ENCODE measurements at regions of chr5 and their contacts with region 1.

Region 1: DNA sequence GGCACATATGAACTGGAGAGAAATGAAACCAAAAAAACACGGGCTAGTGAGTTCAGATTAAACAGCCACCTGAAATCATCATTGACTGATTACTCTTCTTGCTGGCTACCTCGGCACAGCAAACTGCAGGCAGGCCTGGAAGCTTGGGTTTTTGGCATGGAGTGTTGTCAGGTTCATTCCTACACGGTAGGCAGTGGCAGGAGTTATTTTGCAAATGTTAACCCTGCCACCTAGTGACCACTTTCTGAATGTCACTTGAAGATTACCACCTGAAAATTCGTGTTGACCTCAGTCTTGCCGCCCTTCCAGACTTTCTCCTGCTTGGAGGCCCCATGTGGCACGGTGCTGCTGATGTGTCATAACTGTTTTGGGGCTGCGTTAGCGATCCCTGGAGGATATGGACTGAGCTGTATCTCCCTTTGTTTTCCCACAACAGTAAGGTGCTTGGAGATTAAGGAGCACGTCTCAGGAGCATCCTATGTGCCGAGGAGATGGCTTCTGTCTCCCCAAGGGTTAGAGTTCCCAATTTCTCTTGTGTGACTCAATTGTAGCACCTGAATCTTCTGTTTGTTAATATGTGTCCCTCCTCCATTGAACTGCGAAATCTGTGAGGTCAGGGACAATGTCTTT is 12.7 kb upstream of the CD180 start:
- DNase-seq: no peak
- ATAC-seq: peak; percentile 56
- H3K4me3 ChIP-seq: no peak overlapping the region
- H3K27ac ChIP-seq: no peak overlapping the region
- H3K4me1 ChIP-seq: peaks cover 38% of the 10 kb centered on the region
- H3K27me3 ChIP-seq: no peaks in the 10 kb centered on the region
- CTCF ChIP-seq: peak; percentile 68 to 88 (median 71)
- EP300 ChIP-seq: no peak
- POLR2A ChIP-seq: no peak
- RAD21 ChIP-seq: peak; percentile 78

Region 2: DNA sequence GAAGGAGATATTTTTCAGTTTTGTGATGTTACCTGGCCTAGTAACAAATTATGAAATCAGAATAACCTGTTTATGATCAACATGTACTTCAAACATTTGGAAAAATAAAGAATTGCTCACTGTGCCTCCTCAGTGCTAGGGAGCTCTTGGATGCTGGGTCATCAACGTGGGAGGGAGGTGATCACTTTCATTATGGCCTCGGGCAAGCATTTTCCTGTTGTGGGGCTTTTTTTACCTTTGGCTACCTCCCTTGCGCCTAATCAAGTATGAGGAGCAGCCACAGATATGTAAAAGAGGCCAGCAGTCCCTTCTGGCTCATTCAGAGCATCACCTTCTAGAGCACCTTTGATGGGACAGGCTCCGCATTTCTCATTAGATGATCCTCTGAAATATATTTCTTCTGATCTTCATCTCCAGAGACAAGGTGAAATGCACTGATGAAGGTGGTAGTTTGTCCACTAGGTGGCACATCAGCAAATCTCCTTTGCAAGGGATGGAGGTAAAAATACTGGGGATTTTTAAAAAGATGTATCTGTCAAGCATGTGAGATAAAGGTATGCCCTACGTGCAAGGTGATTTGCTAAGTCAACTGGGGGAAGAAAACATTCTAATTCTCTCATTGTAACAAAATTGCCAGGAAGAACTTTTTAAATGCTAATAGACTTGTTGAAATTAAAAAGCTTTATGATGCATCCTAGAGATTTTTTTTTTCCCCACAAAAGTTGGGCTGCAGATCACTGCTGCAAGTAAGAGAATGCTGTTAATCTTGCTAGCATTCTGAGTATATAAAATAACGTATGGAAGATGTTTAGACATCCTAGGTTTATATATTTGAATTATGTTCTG is 394.9 kb before region 1 on chr5:
- CTCF ChIA-PET with region 1: interaction called, 3 read pairs
- POLR2A ChIA-PET with region 1: no interaction called
- RAD21 ChIA-PET with region 1: no interaction called
- SMC1A ChIA-PET with region 1: interaction called, 4 read pairs
- in situ Hi-C with region 1: loop called (anchors 25 kb)
- intact Hi-C with region 1: loop called (anchors 5 kb)
- DNase-seq: peak; percentile 5
- ATAC-seq: peak; percentile 84
- H3K4me3 ChIP-seq: no peak overlapping the region
- H3K27ac ChIP-seq: no peak overlapping the region
- H3K4me1 ChIP-seq: no peaks in the 10 kb centered on the region
- H3K27me3 ChIP-seq: peaks cover 1 to 3% of the 10 kb centered on the region in 2 experiments; a peak in 2 of 4 replicates
- CTCF ChIP-seq: peak; percentile 61 to 75 (median 63)
- EP300 ChIP-seq: no peak
- POLR2A ChIP-seq: no peak
- RAD21 ChIP-seq: peak; percentile 64

Region 3: DNA sequence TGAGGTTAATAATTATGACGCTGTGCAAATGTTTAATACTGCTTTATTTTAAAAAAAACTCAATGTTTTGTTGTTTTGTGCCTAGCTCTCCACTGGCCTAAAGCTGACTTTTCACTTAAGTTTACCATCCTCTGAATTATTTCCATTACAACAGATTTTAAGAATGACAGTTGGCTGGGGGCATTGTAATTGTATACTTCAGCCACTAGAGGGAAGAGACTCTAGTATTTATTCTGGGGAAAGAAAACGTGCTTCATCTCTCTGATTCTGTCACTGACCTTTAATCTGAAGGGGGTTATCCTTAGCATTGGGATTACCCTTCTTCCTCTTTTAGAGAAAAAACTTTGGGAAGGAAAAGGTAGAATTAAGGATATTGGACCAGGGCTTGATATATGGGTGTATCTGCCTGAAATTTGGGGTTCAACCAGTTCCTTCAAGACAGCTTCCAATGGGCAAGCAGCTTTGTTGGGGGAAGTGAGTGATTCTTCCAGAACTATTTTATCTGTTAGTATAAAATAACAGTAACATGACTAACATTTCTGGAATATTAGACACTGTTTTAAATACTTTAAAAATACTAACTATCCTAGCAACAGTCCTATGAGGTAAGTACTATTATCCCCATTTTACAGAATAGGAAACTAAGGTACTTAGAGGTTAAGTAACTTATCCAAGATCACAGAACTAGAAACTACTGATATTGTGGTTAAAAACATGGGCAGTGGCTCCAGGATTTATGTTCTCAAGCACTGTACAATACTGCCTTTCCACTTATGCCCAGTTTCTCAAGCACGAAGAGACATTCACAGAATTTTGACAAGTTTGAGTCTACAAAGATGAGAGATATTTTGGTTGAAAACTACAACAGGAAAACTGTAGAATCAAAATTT is 221.1 kb before region 1 on chr5:
- CTCF ChIA-PET with region 1: interaction called, 5 read pairs
- POLR2A ChIA-PET with region 1: no interaction called
- RAD21 ChIA-PET with region 1: interaction called, 3 read pairs
- SMC1A ChIA-PET with region 1: no interaction called
- in situ Hi-C with region 1: loop called (anchors 5 kb)
- intact Hi-C with region 1: loop called (anchors 1 kb)
- DNase-seq: no peak
- ATAC-seq: peak; percentile 66
- H3K4me3 ChIP-seq: no peak overlapping the region
- H3K27ac ChIP-seq: no peak overlapping the region
- H3K4me1 ChIP-seq: no peaks in the 10 kb centered on the region; the same call in 1 of the 2 replicates
- H3K27me3 ChIP-seq: no peaks in the 10 kb centered on the region; a peak in 1 of 4 replicates
- CTCF ChIP-seq: peak; percentile 47 to 80 (median 71)
- EP300 ChIP-seq: no peak
- POLR2A ChIP-seq: no peak
- RAD21 ChIP-seq: peak; percentile 49

Region 4: DNA sequence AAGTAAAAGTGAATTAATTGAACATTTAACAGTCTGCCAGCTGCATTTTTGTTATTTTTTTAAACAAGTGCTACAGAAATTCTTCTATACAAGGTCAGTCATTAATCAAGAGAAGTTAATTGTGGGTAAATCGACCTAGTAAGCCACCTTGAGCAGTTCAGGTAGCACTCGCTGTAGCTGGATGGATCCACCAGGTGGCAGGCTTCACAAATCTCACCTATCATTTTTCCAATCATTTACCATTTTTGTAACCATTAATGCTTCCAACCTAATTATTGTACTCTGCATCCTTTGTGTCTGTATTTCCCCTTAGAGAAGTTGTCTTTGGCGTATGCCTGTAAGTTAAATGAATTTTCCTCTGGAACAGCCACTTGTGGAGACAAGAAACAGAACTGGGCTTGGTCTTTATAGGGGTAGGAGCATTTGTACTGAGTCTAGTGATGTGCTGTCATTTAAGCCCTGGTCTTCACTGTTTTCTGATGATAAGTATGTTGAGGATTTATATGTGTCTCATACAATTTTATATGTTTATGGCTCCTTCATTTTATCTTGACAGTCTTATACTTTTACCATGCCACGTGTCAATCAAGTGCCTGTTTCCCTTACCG is 52.2 kb before region 1 on chr5:
- CTCF ChIA-PET with region 1: interaction called, 131 read pairs
- POLR2A ChIA-PET with region 1: interaction called, 3 read pairs
- RAD21 ChIA-PET with region 1: interaction called, 31 read pairs
- SMC1A ChIA-PET with region 1: interaction called, 24 read pairs
- in situ Hi-C with region 1: loop called (anchors 5 kb)
- intact Hi-C with region 1: loop called (anchors 1 kb)
- DNase-seq: no peak
- ATAC-seq: peak; percentile 85
- H3K4me3 ChIP-seq: no peak overlapping the region
- H3K27ac ChIP-seq: no peak overlapping the region
- H3K4me1 ChIP-seq: peaks cover 4% of the 10 kb centered on the region; the same call in 1 of the 2 replicates
- H3K27me3 ChIP-seq: no peaks in the 10 kb centered on the region; a peak in 2 of 4 replicates
- CTCF ChIP-seq: peak; percentile 74 to 80 (median 79)
- EP300 ChIP-seq: no peak
- POLR2A ChIP-seq: no peak
- RAD21 ChIP-seq: peak; percentile 60

Region 5: GRCh38 chr5:67221487-67222242 is 12.4 kb after region 1 on chr5:
- CTCF ChIA-PET with region 1: interaction called, 5 read pairs
- POLR2A ChIA-PET with region 1: interaction called, 3 read pairs
- RAD21 ChIA-PET with region 1: interaction called, 7 read pairs
- SMC1A ChIA-PET with region 1: interaction called, 23 read pairs
- in situ Hi-C with region 1: no loop called
- intact Hi-C with region 1: loop called (anchors 1 kb)
- DNase-seq: no peak
- ATAC-seq: peak; percentile 94
- H3K4me3 ChIP-seq: no peak overlapping the region
- H3K27ac ChIP-seq: peak overlapping the region; percentile 18; the same call in 1 of the 2 replicates
- H3K4me1 ChIP-seq: peaks cover 16% of the 10 kb centered on the region
- H3K27me3 ChIP-seq: no peaks in the 10 kb centered on the region
- CTCF ChIP-seq: no peak
- EP300 ChIP-seq: peak in 1 of 2 experiments; percentile 43; a peak in 1 of 4 replicates
- POLR2A ChIP-seq: no peak
- RAD21 ChIP-seq: no peak